Esophagus muscularis mucosa (tissue), 4 donors: ENCODE measurements at regions of chr3 and their contacts with region 1.

Region 1: DNA sequence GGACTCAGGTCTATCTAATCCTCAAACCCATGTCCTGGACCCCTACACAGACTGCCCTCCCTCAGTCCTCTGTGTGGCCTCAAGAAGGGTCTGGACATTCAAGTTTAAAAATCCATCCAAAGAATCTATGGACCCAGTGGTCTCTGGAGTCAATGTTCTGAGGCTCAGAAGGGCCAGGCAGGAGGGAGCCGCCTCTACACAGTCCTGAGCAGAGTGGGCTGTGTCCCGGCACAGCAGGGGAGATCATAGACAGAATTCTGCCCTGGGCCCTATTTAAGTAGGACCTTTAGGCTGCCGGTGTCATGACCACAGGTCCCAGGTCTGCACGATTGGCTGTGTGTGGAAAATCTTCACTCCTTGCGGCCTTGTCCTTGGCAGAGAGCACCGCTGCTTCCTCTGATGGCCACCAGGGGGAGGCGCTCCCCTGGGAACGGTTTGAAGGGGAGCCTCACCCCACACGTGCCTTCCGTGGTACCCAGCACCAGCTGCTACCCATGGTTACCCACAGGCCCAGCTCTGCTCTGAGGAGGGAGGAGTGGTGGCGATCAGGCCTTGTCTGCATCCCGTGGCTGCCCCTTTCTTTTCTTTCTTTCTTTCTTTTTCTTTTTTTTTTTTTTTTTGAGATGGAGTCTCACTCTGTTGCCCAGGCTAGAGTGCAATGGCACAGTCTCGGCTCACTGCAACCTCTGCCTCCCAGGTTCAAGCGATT is 37.9 kb downstream of the CHRD start:
- DNase-seq: no peak
- H3K4me3 ChIP-seq: no peak overlapping the region
- H3K27ac ChIP-seq: no peak overlapping the region
- H3K4me1 ChIP-seq: peaks cover 0 to 4% (median 2%) of the 10 kb centered on the region in 4 donors
- H3K27me3 ChIP-seq: no peaks in the 10 kb centered on the region
- CTCF ChIP-seq: peak; percentile 66 to 82 (median 76)
- EP300 ChIP-seq: no peak
- POLR2A ChIP-seq: no peak

Region 2: DNA sequence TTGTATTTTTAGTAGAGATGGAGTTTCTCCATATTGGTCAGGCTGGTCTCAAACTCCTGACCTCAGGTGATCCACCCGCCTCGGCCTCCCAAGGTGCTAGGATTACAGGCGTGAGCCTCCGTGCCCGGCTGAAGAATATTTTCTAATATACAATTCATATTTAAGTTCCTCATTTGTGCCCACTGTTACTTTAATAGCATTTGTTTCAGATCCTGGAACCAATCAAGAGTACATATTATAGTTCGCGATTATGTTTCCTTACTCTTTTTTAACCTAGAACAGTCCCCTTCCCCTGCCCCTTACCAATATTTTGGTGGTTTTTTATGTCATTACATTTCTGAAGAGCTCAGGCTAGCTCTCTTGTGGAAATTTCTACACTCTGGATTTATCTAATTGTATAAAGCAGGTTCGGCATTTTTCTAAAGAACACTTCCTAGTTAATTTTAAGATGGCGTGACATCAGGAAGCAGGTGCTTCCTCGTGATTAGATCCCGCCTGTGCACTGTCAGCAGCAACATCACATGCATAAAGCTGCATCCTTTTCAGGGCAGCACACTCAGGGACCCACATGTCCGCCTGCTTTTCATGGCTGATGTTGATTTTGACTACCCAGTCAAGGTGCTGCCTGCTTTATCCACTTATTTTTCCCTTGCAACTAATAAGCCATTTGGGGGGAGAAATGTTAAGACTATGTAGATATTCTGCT is 55.1 kb after region 1 on chr3:
- intact Hi-C with region 1: loop called (anchors 10 kb)
- DNase-seq: peak; percentile 90
- H3K4me3 ChIP-seq: no peak overlapping the region
- H3K27ac ChIP-seq: peak overlapping the region; percentile 3 to 49 (median 38)
- H3K4me1 ChIP-seq: no peaks in the 10 kb centered on the region
- H3K27me3 ChIP-seq: peaks cover 0 to 36% (median 0%) of the 10 kb centered on the region in 4 donors
- CTCF ChIP-seq: no peak
- EP300 ChIP-seq: no peak
- POLR2A ChIP-seq: no peak

Region 3: GRCh38 chr3:184498986-184499606 is 81.3 kb after region 1 on chr3:
- intact Hi-C with region 1: no loop called
- DNase-seq: no peak
- H3K4me3 ChIP-seq: no peak overlapping the region
- H3K27ac ChIP-seq: no peak overlapping the region
- H3K4me1 ChIP-seq: no peaks in the 10 kb centered on the region
- H3K27me3 ChIP-seq: peaks cover 0 to 62% (median 3%) of the 10 kb centered on the region in 4 donors
- CTCF ChIP-seq: no peak
- EP300 ChIP-seq: no peak
- POLR2A ChIP-seq: no peak

Region 4: DNA sequence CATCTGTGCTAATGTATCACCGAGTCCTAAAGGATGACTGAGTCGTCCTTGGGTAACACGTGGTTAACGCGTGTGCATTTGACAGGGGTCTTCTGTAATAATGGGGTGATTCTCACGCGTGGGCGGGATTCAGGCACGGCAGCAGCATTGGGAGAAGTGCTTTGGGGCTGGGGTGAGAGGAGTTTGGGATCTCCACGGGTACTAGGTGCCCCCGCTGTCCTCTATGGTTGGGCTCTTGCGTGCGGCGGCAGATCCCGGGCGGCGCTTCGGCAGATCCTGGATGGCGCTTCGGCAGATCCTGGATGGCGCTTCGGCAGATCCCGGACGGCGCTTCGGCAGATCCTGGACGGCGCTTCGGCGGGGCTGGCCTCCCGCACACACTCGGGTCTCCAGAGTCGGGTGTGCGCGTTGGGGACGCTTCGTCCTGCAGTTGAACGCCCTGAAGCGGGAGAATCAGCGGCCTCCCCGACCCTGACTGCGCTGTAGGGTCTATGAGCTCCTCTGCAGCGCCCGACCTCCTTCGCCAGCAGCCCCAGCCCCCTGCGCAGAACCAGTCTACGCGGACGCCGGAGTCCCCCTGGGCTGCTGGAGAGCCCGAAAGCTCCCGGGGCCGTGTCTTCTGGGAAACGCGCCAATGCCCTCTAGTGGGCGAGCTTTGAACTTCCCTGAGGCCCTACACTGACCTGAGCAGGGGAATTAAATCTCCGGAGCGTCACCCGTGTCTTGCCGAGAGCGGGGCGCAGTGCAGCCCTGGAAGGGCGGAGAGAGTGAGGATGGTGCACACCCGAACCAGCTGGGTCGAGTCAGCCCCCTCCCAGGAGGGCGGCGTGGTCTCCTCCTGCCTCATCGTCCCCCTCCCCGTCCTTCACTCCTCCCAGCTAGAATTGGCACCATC is 95.8 kb after region 1 on chr3:
- intact Hi-C with region 1: loop called (anchors 10 kb)
- DNase-seq: peak; percentile 97
- H3K4me3 ChIP-seq: peak overlapping the region; percentile 38 to 62 (median 50)
- H3K27ac ChIP-seq: peak overlapping the region in 2 of 4 donors; percentile 22 to 33
- H3K4me1 ChIP-seq: peaks cover 4 to 17% (median 13%) of the 10 kb centered on the region in 4 donors
- H3K27me3 ChIP-seq: peaks cover 0 to 59% (median 14%) of the 10 kb centered on the region in 4 donors
- CTCF ChIP-seq: peak; percentile 80 to 95 (median 85)
- EP300 ChIP-seq: no peak
- POLR2A ChIP-seq: no peak